ENCODE measurements at regions of chr14 and their contacts with region 1.

Region 1: GRCh38 chr14:93788543-93789227 is 400 bp upstream of the PRIMA1 start:
- DNase-seq: no peak
- ATAC-seq: peak; percentile 79
- H3K4me3 ChIP-seq: peak overlapping the region; percentile 52 to 71 (median 56)
- H3K27ac ChIP-seq: no peak overlapping the region
- H3K4me1 ChIP-seq: peaks cover 50% of the 10 kb centered on the region
- H3K27me3 ChIP-seq: peaks cover 0 to 15% of the 10 kb centered on the region in 2 experiments; a peak in 2 of 5 replicates
- CTCF ChIP-seq: peak; percentile 32; the same call in 1 of the 2 replicates
- EP300 ChIP-seq: no peak
- POLR2A ChIP-seq: peak in 1 of 2 experiments; percentile 46; a peak in 1 of 4 replicates
- RAD21 ChIP-seq: no peak

Region 2: DNA sequence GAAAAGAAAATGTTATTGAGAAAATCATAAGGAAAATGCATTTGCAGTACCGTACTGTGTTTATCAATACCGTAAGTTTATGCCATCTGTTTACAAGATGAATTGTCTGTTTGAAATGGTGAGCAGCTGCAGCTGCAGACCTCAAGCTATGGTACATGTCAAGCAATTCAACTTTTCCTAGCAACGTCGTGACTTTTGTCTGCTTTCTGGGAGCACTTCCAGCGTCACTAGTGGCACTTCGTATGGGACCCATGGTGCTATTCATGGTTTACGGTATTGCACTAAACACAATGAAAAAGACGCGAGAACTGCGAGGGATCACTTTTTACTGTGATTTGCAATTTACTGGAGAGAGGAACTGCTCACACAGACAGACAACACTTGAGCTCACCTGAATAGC is 197.2 kb before region 1 on chr14:
- CTCF ChIA-PET with region 1: no interaction called
- POLR2A ChIA-PET with region 1: no interaction called
- in situ Hi-C with region 1: no loop called
- intact Hi-C with region 1: no loop called
- DNase-seq: no peak
- ATAC-seq: no peak
- H3K4me3 ChIP-seq: no peak overlapping the region
- H3K27ac ChIP-seq: no peak overlapping the region
- H3K4me1 ChIP-seq: no peaks in the 10 kb centered on the region
- H3K27me3 ChIP-seq: peaks cover 2 to 19% of the 10 kb centered on the region in 2 experiments; a peak in 3 of 5 replicates
- CTCF ChIP-seq: no peak
- EP300 ChIP-seq: no peak
- POLR2A ChIP-seq: no peak
- RAD21 ChIP-seq: no peak

Region 3: GRCh38 chr14:93736378-93737014 is 52.2 kb before region 1 on chr14:
- CTCF ChIA-PET with region 1: interaction called, 5 read pairs
- POLR2A ChIA-PET with region 1: no interaction called
- in situ Hi-C with region 1: no loop called
- intact Hi-C with region 1: loop called (anchors 1 kb)
- DNase-seq: peak; percentile 16
- ATAC-seq: peak; percentile 90
- H3K4me3 ChIP-seq: no peak overlapping the region
- H3K27ac ChIP-seq: no peak overlapping the region
- H3K4me1 ChIP-seq: no peaks in the 10 kb centered on the region
- H3K27me3 ChIP-seq: no peaks in the 10 kb centered on the region
- CTCF ChIP-seq: peak; percentile 73
- EP300 ChIP-seq: no peak
- POLR2A ChIP-seq: no peak
- RAD21 ChIP-seq: peak; percentile 70

Region 4: DNA sequence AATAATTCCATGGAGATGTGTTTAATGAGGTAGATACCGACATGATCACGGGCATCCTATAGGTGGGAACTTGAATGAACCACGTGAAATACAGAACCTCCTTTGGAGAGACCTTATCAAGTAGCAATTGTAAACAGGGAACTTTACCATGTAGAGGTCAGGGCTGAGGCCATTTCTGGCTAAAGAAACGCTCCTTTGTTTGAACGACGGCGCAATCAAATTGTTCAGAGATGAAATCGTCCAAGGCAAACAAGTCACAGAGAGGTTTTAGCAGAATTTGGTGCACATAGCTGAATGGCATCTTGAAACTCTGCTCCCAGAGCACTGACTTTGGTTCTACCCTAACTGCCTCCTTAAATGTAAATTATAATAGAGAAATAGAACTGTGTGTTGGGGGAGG is 10.2 kb before region 1 on chr14:
- CTCF ChIA-PET with region 1: no interaction called
- POLR2A ChIA-PET with region 1: interaction called, 3 read pairs
- in situ Hi-C with region 1: no loop called
- intact Hi-C with region 1: loop called (anchors 1 kb)
- DNase-seq: peak; percentile 96
- ATAC-seq: peak; percentile 86
- H3K4me3 ChIP-seq: no peak overlapping the region
- H3K27ac ChIP-seq: peak overlapping the region; percentile 56
- H3K4me1 ChIP-seq: peaks cover 51% of the 10 kb centered on the region
- H3K27me3 ChIP-seq: no peaks in the 10 kb centered on the region
- CTCF ChIP-seq: no peak
- EP300 ChIP-seq: peak in 1 of 2 experiments; percentile 92; a peak in 2 of 4 replicates
- POLR2A ChIP-seq: no peak
- RAD21 ChIP-seq: no peak

Region 5: DNA sequence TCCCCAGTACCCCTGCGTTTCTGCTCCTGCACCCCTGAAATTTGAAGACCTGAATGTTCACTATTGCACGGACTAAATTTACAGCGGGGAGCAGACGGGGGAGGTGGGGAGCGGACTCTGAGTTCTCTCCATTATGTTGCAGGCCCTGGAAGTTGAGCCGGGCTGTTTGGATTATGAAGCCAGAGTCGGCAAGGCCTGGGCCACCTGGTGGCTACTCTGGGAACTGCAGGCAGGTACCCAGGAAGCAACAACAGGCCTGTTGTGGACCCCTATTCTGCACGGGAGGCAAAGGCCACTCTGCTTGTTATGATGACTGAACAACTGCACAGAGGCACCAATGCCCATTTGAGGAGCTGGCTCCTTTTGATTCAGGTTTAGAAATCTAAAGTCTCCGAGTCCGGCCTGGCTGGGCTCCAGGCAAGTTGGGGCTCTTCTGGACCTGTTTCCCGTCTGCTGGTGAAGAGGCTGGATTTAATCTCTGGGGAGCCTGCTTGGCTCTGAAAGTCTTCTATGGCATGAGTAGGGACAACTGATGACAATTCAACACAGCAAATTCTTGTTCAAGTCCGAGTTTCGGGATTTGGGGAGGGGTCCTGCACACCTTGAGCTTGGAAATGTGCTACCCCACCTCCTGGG is 104.4 kb after region 1 on chr14:
- CTCF ChIA-PET with region 1: no interaction called
- POLR2A ChIA-PET with region 1: no interaction called
- in situ Hi-C with region 1: no loop called
- intact Hi-C with region 1: loop called (anchors 10 kb)
- DNase-seq: peak; percentile 44
- ATAC-seq: peak; percentile 80
- H3K4me3 ChIP-seq: peak overlapping the region in 1 of 3 experiments; percentile 18; a peak in 1 of 6 replicates
- H3K27ac ChIP-seq: no peak overlapping the region
- H3K4me1 ChIP-seq: peaks cover 55% of the 10 kb centered on the region
- H3K27me3 ChIP-seq: peaks cover 5 to 48% of the 10 kb centered on the region in 2 experiments; a peak in 4 of 5 replicates
- CTCF ChIP-seq: peak; percentile 89
- EP300 ChIP-seq: no peak
- POLR2A ChIP-seq: no peak
- RAD21 ChIP-seq: peak; percentile 76

Region 6: GRCh38 chr14:93906341-93907329 is 118.0 kb after region 1 on chr14:
- CTCF ChIA-PET with region 1: no interaction called
- POLR2A ChIA-PET with region 1: no interaction called
- in situ Hi-C with region 1: no loop called
- intact Hi-C with region 1: no loop called
- DNase-seq: peak; percentile 59
- ATAC-seq: no peak
- H3K4me3 ChIP-seq: no peak overlapping the region
- H3K27ac ChIP-seq: peak overlapping the region; percentile 81
- H3K4me1 ChIP-seq: peaks cover 99% of the 10 kb centered on the region
- H3K27me3 ChIP-seq: no peaks in the 10 kb centered on the region
- CTCF ChIP-seq: peak; percentile 74
- EP300 ChIP-seq: no peak
- POLR2A ChIP-seq: no peak
- RAD21 ChIP-seq: peak; percentile 54; the same call in 1 of the 2 replicates